Sigmoid colon (tissue), 7 donors: ENCODE measurements at regions of chr11 and their contacts with region 1.

Region 1: GRCh38 chr11:72821883-72822799 is 7.9 kb downstream of the ATG16L2 start:
- DNase-seq: peak; percentile 94
- H3K4me3 ChIP-seq: peak overlapping the region; percentile 34 to 55 (median 48)
- H3K27ac ChIP-seq: peak overlapping the region; percentile 71 to 75 (median 74)
- H3K4me1 ChIP-seq: peaks cover 0 to 15% (median 12%) of the 10 kb centered on the region in 4 donors
- H3K27me3 ChIP-seq: no peaks in the 10 kb centered on the region
- CTCF ChIP-seq: peak in 1 of 4 experiments; percentile 24
- EP300 ChIP-seq: no peak
- POLR2A ChIP-seq: peak in 1 of 2 donors; percentile 36

Region 2: GRCh38 chr11:73360336-73361013 is 538.3 kb after region 1 on chr11:
- intact Hi-C with region 1: loop called (anchors 10 kb)
- DNase-seq: no peak
- H3K4me3 ChIP-seq: no peak overlapping the region
- H3K27ac ChIP-seq: peak overlapping the region in 3 of 4 donors; percentile 26 to 46 (median 38)
- H3K4me1 ChIP-seq: peaks cover 0 to 8% (median 4%) of the 10 kb centered on the region in 4 donors
- H3K27me3 ChIP-seq: no peaks in the 10 kb centered on the region
- CTCF ChIP-seq: no peak
- EP300 ChIP-seq: no peak
- POLR2A ChIP-seq: no peak

Region 3: GRCh38 chr11:73453562-73453961 is 631.4 kb after region 1 on chr11:
- intact Hi-C with region 1: no loop called
- DNase-seq: no peak
- H3K4me3 ChIP-seq: no peak overlapping the region
- H3K27ac ChIP-seq: no peak overlapping the region
- H3K4me1 ChIP-seq: peaks cover 0 to 6% (median 0%) of the 10 kb centered on the region in 4 donors
- H3K27me3 ChIP-seq: no peaks in the 10 kb centered on the region
- CTCF ChIP-seq: no peak
- EP300 ChIP-seq: no peak
- POLR2A ChIP-seq: no peak